ENCODE measurements at regions of chr14 and their contacts with region 1.

Region 1: DNA sequence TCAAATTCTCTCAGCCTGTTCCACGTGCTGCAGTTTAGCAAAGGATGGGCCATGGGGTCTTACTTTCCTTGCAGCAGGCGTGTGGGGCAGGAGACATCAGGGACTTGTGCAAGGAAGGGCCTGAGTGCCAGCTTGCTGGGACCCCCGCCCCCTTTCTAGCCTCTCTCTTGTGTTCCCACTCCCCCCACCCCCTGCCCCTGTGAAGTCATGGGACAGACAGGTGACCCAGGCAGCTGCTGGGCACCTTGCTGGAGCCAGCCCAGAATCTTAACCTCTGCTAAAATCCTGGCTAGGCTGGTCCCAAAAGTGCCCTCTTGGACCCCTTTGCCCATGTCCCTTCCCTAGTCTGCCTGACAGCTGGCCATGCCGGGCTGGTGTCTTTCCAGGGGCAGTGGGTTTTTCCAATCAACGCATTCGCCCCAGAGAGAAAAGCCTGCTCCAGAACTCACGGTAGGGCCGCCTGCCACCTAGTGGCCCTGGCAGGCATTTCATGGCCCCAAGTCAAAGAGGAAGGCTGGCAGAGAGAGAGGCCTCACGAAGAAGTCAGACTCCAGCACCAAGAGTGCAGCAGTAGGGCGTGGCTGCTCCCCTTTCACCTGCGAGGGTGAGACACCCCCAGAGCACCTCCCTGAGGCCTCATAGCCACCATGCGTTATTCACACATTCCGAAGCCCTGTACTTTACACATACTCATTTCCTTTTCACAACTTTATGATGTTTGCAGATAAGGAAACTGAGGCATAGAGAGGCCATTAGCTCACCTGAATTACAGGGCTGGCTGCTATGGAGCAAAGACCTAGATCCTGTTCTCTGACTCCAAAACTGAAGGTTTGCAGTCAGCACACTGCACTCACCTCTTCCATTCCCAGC is 67.4 kb downstream of the LGMN start:
- DNase-seq: peak; percentile 75
- ATAC-seq: peak; percentile 15
- H3K4me3 Mint-ChIP-seq: no peak overlapping the region
- H3K27ac Mint-ChIP-seq: peak overlapping the region; percentile 70
- H3K4me1 Mint-ChIP-seq: peaks cover 39% of the 10 kb centered on the region
- H3K27me3 Mint-ChIP-seq: no peaks in the 10 kb centered on the region
- CTCF ChIP-seq: no peak

Region 2: DNA sequence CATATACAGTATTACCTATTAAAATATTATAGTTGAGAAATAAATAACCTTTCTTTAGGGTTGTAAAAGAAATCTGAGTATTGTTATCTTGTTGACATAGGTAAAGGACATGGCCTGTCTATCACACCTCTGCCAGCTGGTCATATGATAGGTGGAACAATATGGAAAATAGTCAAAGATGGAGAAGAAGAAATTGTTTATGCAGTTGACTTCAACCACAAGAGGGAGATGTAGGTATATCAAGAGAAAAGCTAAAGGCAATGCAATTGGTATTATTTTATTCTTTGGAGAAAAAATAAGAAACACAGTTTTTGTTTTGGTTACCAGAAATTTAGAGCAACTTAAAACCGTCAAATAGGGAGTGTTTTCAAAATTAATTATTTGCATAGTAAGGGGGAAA is 545.7 kb before region 1 on chr14:
- CTCF ChIA-PET with region 1: interaction called, 9 read pairs
- POLR2A ChIA-PET with region 1: no interaction called
- intact Hi-C with region 1: loop called (anchors 1 kb)
- DNase-seq: no peak
- ATAC-seq: no peak
- H3K4me3 Mint-ChIP-seq: no peak overlapping the region
- H3K27ac Mint-ChIP-seq: no peak overlapping the region
- H3K4me1 Mint-ChIP-seq: no peaks in the 10 kb centered on the region
- H3K27me3 Mint-ChIP-seq: no peaks in the 10 kb centered on the region
- CTCF ChIP-seq: no peak

Region 3: DNA sequence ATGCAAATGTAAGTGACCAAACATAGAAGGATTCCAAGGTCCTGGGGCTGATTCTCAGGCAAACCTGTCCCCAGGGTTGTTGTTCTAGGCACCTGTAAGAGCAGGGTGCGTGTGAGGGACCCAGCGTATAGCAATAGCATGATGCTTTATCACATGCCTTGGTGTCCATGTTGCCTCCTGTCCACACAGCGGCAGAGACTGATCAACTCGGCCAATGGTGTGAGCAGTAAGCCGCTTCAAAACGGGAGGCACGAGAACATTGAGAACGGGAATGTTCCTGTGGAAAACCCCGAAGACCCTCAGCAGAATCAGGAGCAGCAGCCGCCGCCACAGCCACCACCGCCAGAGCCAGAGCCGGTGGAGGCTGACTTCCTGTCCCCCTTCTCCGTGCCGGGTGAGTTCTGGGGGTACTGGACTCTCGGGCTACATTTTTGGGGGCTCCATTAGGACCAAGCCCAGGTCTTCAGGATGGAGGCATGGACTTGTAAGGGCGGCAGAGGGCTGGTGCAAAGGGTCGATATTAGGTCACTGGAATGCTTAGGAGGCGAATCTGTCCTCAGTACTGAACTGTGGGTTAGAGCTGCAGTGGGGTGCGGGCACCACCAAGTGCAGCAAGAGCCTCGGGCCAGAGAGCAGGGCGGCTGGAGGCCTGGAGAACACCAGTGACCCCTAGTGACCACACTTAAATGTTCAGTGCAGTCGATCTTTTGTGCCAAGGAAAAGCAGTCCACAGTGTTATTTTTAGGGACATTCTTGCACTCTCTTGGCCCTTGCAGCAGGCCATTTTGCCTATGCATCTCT is 224.6 kb before region 1 on chr14:
- CTCF ChIA-PET with region 1: interaction called, 4 read pairs
- POLR2A ChIA-PET with region 1: interaction called, 4 read pairs
- intact Hi-C with region 1: loop called (anchors 2 kb)
- DNase-seq: no peak
- ATAC-seq: peak; percentile 77
- H3K4me3 Mint-ChIP-seq: no peak overlapping the region
- H3K27ac Mint-ChIP-seq: no peak overlapping the region
- H3K4me1 Mint-ChIP-seq: peaks cover 6% of the 10 kb centered on the region
- H3K27me3 Mint-ChIP-seq: peaks cover 5% of the 10 kb centered on the region
- CTCF ChIP-seq: no peak

Region 4: DNA sequence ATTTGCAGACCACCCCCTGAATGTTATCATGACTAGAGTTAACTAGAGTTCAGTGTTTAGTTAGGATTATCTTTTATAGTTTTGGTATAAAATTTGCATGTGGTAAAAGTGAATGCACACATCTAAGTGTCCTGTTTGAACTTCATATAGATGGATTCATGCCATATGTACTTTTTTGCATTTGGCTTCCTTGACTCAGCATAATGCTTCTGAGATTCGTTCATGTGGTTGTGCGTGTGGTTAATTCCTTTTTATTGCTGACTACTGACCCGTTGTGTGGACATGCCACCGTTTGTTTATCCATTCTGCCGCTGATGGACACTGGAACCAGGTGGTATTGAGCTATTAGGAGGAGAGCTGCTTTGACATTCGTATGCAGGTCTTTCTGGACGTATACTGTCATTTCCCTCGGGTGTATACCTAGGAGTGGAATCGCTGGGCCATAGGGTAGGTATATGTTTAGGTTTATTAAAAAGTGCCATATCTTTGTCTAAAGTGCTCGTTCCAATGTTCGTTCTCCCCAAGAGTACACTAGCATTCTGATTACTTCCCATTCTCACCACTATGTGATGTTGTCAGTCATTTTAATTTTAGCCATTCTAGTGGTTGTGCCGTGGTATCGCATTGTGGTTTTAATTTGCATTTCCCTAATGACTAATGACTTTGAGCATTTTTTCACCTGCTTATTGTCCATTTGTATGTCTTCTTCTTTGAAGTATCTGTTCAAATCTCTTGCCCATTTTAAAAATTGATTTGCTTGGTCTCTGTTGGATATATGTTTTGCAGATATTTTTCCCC is 129.8 kb before region 1 on chr14:
- CTCF ChIA-PET with region 1: no interaction called
- POLR2A ChIA-PET with region 1: no interaction called
- intact Hi-C with region 1: loop called (anchors 1 kb)
- DNase-seq: no peak
- ATAC-seq: peak; percentile 78
- H3K4me3 Mint-ChIP-seq: peak overlapping the region; percentile 55
- H3K27ac Mint-ChIP-seq: no peak overlapping the region
- H3K4me1 Mint-ChIP-seq: peaks cover 44% of the 10 kb centered on the region
- H3K27me3 Mint-ChIP-seq: peaks cover 7% of the 10 kb centered on the region
- CTCF ChIP-seq: no peak

Region 5: GRCh38 chr14:92651106-92651757 is 29.8 kb before region 1 on chr14:
- CTCF ChIA-PET with region 1: interaction called, 9 read pairs
- POLR2A ChIA-PET with region 1: interaction called, 144 read pairs
- intact Hi-C with region 1: loop called (anchors 1 kb)
- DNase-seq: peak; percentile 69
- ATAC-seq: peak; percentile 77
- H3K4me3 Mint-ChIP-seq: peak overlapping the region; percentile 98
- H3K27ac Mint-ChIP-seq: peak overlapping the region; percentile 95
- H3K4me1 Mint-ChIP-seq: peaks cover 76% of the 10 kb centered on the region
- H3K27me3 Mint-ChIP-seq: no peaks in the 10 kb centered on the region
- CTCF ChIP-seq: no peak

Region 6: GRCh38 chr14:92704036-92704804 is 23.2 kb after region 1 on chr14:
- CTCF ChIA-PET with region 1: interaction called, 6 read pairs
- POLR2A ChIA-PET with region 1: interaction called, 6 read pairs
- intact Hi-C with region 1: loop called (anchors 1 kb)
- DNase-seq: peak; percentile 57
- ATAC-seq: peak; percentile 98
- H3K4me3 Mint-ChIP-seq: peak overlapping the region; percentile 51
- H3K27ac Mint-ChIP-seq: peak overlapping the region; percentile 90
- H3K4me1 Mint-ChIP-seq: peaks cover 60% of the 10 kb centered on the region
- H3K27me3 Mint-ChIP-seq: no peaks in the 10 kb centered on the region
- CTCF ChIP-seq: no peak

Measured in activated B cell treated with CpG ODN at 0.5 μM for 24 hours (primary cell).